Heart right ventricle (tissue), 16 donors: ENCODE measurements at regions of chr13 and their contacts with region 1.

Region 1: GRCh38 chr13:59666504-59666903 is 497.2 kb downstream of the DIAPH3 start:
- DNase-seq: no peak
- ATAC-seq: peak in 6 of 8 donors; percentile 47 to 88 (median 76)
- H3K4me3 ChIP-seq: no peak overlapping the region
- H3K27ac ChIP-seq: peak overlapping the region in 6 of 10 donors; percentile 11 to 78 (median 54)
- H3K4me1 ChIP-seq: peaks cover 0 to 35% (median 13%) of the 10 kb centered on the region in 9 donors
- H3K27me3 ChIP-seq: no peaks in the 10 kb centered on the region
- CTCF ChIP-seq: no peak

Region 2: DNA sequence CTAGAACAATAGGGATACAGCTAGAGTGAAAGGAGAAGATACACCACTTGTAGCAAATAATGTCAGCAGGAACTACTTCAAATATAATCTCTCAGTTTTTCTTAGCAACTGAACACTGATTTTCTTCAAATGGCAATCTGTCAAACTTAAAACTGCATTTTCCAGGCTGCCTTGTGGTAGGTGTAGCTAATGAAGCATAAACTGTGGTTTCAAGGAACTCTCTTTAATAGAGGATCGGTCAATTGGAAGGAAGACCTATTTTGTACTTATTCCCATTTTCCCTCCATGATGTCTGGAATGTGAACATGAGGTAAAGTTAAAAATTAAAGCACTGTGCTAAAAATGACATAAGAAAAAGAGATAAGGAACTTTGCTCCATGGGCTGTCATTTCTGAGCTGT is 773.1 kb before region 1 on chr13:
- intact Hi-C with region 1: no loop called
- DNase-seq: no peak
- ATAC-seq: no peak
- H3K4me3 ChIP-seq: no peak overlapping the region
- H3K27ac ChIP-seq: no peak overlapping the region
- H3K4me1 ChIP-seq: no peaks in the 10 kb centered on the region
- H3K27me3 ChIP-seq: no peaks in the 10 kb centered on the region
- CTCF ChIP-seq: no peak

Region 3: DNA sequence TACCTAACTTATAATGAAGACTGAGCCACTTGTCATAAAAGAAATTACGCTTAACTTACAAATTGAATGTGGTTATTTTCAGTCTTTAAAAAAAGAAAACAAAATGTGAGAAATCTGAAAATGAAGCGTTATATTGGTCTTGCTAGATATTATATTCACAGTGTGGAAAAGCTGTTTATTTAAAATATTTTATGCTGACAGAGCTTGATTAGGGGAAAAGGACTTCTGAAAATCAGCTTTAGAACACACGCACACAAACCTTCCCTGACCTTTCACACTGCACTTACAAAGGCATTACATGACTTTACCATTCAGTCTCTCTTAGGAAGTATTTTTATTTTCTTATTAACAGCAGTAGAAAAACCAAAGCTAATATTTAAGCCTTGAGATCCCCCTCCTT is 35.8 kb after region 1 on chr13:
- intact Hi-C with region 1: loop called in 1 of 10 experiments (anchors 1 kb)
- DNase-seq: no peak
- ATAC-seq: no peak
- H3K4me3 ChIP-seq: no peak overlapping the region
- H3K27ac ChIP-seq: no peak overlapping the region
- H3K4me1 ChIP-seq: no peaks in the 10 kb centered on the region
- H3K27me3 ChIP-seq: no peaks in the 10 kb centered on the region
- CTCF ChIP-seq: no peak